ENCODE measurements at regions of chr19 and their contacts with region 1.

Region 1: DNA sequence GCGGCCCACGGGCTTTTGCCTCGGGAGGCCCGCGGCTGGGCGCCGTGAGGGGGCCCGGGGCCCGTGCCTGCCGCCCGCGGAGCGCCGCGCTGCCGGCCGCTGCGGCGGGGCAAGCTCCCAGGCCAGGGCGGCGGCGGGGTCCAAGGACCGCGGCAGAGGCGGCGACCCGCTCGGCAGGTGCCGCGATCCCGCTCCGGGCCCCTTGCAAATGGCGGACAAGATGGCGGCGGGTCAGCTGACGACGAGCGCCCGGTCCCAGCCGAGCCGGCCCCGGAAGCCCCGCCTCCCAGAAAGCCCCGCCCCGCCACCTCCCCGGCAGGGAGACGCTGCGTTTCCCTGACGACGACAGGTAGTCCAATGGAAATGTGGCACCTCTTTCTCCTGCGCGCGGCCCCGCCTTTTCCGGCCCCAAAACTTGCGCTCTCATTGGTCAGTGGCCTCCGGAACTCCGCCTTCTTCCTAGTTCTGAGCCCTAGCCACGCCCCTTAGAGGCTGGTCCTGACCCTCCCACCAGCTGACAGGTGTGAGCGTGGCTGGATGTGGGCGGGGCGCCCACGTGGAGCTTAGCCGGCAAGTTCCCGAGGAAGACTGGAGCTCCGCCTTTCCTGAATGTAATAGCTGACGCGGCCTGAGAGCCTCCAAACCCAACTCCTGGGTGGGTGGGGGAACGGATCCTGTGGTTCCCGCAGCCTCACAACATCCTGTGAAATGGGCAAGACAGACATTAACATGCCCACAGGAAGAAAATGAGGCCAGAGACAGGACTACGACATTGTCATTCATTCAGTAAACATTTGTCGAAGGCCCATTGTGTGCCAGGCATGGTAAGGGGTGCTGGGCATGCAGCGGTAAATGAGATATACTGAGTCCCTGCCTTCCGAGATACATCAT is at the start of gene AP3D1:
- DNase-seq: peak; percentile 99
- ATAC-seq: peak; percentile 85
- H3K4me3 ChIP-seq: peak within 1 kb of the TSS; percentile 96 to 100
- H3K27ac ChIP-seq: peak within 1 kb of the TSS; percentile 84
- H3K4me1 ChIP-seq: peaks cover 41 to 58% of the 10 kb centered on the region in 2 experiments
- H3K27me3 ChIP-seq: no peaks in the 10 kb centered on the region
- CTCF ChIP-seq: no peak
- POLR2A ChIP-seq: no peak
- RAD21 ChIP-seq: no peak
- total RNA-seq, gene AP3D1: 137 TPM

Region 2: DNA sequence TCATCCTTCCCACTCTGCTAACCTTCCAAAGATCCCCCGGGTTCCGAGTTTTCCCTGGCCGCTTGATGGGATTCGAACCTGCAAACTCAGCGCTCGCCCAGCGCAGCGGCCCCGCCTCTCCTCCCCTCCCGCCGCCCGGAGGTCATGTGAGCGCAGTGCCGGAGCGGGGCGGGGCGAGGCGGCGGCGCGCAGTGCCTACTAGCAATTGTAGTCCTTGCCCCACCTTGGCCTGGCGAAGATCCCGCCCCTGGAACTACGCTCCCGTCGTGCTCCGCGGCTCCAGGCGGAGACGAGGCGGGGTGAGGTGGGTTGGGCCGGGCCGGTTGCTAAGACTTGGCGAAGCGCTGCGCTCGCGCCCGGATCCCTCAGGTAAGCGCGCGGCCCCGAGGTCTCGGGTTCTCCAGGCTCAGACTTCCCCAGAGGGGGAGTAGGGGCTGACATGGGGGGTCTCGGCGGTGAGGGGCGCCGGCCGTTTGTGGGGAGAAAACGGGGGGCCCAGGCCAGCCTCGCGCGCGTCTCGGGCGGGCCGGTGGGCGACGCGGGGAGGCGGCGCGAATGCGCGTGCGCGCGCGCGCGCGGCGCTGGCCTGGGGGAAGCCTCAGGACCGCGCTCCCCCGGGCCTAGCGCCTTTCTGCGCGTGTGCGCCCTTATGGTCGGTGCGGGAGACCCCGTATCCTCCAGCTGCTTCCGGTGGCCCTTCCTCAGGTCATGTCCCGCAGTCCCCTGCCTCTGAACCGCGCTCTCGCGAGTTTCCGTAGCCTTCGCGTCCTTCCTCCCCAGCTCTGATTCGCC is 246.3 kb before region 1 on chr19 and contains the starts of genes ADAT3 and SCAMP4:
- CTCF ChIA-PET with region 1: no interaction called
- POLR2A ChIA-PET with region 1: no interaction called
- RAD21 ChIA-PET with region 1: no interaction called
- intact Hi-C with region 1: loop called (anchors 5 kb)
- DNase-seq: peak; percentile 98
- ATAC-seq: peak; percentile 95
- H3K4me3 ChIP-seq: peak within 1 kb of the TSS; percentile 55 to 95
- H3K27ac ChIP-seq: peak within 1 kb of the TSS; percentile 85
- H3K4me1 ChIP-seq: peaks cover 9 to 26% of the 10 kb centered on the region in 2 experiments; a peak in 3 of 4 replicates
- H3K27me3 ChIP-seq: no peaks in the 10 kb centered on the region
- CTCF ChIP-seq: no peak
- POLR2A ChIP-seq: peak; percentile 60
- RAD21 ChIP-seq: no peak
- total RNA-seq, gene ADAT3: 15.9 TPM
- total RNA-seq, gene SCAMP4: 63.3 TPM

Region 3: GRCh38 chr19:2032296-2032941 is 119.2 kb before region 1 on chr19:
- CTCF ChIA-PET with region 1: no interaction called
- POLR2A ChIA-PET with region 1: no interaction called
- RAD21 ChIA-PET with region 1: no interaction called
- intact Hi-C with region 1: loop called (anchors 5 kb)
- DNase-seq: peak; percentile 84
- ATAC-seq: peak; percentile 64
- H3K4me3 ChIP-seq: peak overlapping the region; percentile 36 to 57
- H3K27ac ChIP-seq: peak overlapping the region; percentile 93
- H3K4me1 ChIP-seq: peaks cover 62 to 82% of the 10 kb centered on the region in 2 experiments
- H3K27me3 ChIP-seq: no peaks in the 10 kb centered on the region
- CTCF ChIP-seq: no peak
- POLR2A ChIP-seq: no peak
- RAD21 ChIP-seq: no peak

Region 4: DNA sequence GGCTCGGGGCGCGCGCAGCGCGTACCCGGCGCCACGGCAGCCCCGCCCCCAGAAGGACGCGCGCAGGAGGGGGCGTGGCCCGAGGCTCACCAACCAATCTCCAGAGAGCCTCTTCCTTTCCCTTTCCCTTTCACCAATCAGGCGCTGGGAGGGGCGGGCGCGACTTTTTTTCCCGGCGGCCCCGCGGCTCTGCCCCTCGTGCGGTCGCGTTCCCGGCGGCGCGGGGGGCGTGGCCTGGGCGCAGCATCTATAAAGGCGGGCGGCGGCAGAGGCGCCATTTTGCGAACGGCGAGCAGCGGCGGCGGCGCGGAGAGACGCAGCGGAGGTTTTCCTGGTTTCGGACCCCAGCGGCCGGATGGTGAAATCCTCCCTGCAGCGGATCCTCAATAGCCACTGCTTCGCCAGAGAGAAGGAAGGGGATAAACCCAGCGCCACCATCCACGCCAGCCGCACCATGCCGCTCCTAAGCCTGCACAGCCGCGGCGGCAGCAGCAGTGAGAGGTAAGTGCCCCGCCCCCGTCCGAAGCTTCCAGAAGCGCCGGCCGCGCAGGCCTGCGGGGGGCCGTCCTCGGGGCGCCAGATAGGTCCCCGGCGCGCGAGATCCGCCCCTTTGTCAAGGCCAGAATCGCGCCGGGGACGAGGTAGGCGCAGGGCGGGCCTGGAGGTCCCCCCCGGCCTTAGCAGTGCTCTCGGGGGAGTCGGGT is 117.8 kb after region 1 on chr19:
- CTCF ChIA-PET with region 1: interaction called, 10 read pairs
- POLR2A ChIA-PET with region 1: no interaction called
- RAD21 ChIA-PET with region 1: interaction called in 1 of 2 experiments, 4 read pairs
- intact Hi-C with region 1: loop called (anchors 1 kb)
- DNase-seq: peak; percentile 85
- ATAC-seq: peak; percentile 87
- H3K4me3 ChIP-seq: peak overlapping the region; percentile 97 to 98
- H3K27ac ChIP-seq: peak overlapping the region; percentile 98
- H3K4me1 ChIP-seq: peaks cover 22 to 48% of the 10 kb centered on the region in 2 experiments
- H3K27me3 ChIP-seq: no peaks in the 10 kb centered on the region
- CTCF ChIP-seq: peak in 1 of 3 experiments; percentile 7; a peak in 1 of 6 replicates
- POLR2A ChIP-seq: peak; percentile 96
- RAD21 ChIP-seq: no peak

Region 5: GRCh38 chr19:2610637-2611482 is 459.3 kb after region 1 on chr19:
- CTCF ChIA-PET with region 1: interaction called, 4 read pairs
- POLR2A ChIA-PET with region 1: no interaction called
- RAD21 ChIA-PET with region 1: no interaction called
- intact Hi-C with region 1: loop called (anchors 10 kb)
- DNase-seq: peak; percentile 59
- ATAC-seq: peak; percentile 94
- H3K4me3 ChIP-seq: peak overlapping the region; percentile 36 to 51
- H3K27ac ChIP-seq: no peak overlapping the region
- H3K4me1 ChIP-seq: peaks cover 8 to 21% of the 10 kb centered on the region in 2 experiments; a peak in 3 of 4 replicates
- H3K27me3 ChIP-seq: no peaks in the 10 kb centered on the region
- CTCF ChIP-seq: peak; percentile 90 to 95 (median 91)
- POLR2A ChIP-seq: no peak
- RAD21 ChIP-seq: peak; percentile 99

Measured in HCT116 (cell line).